Calu3 (cell line): ENCODE measurements at regions of chr4 and their contacts with region 1.

Region 1: DNA sequence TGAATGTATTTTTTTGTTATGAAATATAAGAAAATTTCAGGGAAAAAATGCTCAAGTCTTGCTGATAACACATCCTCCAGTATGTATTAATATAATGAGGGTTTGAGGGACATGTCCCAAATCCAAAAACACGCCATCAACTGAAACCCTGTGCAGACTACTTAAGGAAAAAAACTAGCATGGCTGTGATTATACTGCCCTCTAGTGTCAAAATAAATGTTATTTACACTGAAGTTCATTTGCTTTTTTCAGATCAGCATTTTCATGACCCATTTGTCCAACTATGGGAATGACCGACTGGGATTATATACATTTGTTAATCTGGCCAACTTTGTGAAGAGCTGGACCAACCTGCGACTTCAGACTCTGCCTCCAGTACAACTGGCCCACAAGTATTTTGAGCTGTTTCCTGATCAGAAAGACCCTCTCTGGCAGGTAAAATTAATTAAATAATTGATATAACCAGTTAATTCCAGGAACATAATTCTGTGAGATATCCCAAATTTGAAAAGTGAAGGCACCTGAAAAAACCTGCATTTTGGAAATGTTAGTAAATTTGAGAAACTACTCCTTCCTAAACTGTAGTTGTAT is 128.5 kb downstream of the PRSS12 start:
- DNase-seq: no peak
- H3K4me3 Mint-ChIP-seq: no peak overlapping the region
- H3K27ac Mint-ChIP-seq: no peak overlapping the region
- H3K4me1 Mint-ChIP-seq: no peaks in the 10 kb centered on the region
- H3K27me3 Mint-ChIP-seq: no peaks in the 10 kb centered on the region
- CTCF ChIP-seq: peak; percentile 29

Region 2: GRCh38 chr4:117560329-117560728 is 664.0 kb before region 1 on chr4:
- CTCF ChIA-PET with region 1: no interaction called
- intact Hi-C with region 1: loop called (anchors 5 kb)
- DNase-seq: no peak
- H3K4me3 Mint-ChIP-seq: no peak overlapping the region
- H3K27ac Mint-ChIP-seq: no peak overlapping the region
- H3K4me1 Mint-ChIP-seq: no peaks in the 10 kb centered on the region
- H3K27me3 Mint-ChIP-seq: no peaks in the 10 kb centered on the region
- CTCF ChIP-seq: no peak

Region 3: DNA sequence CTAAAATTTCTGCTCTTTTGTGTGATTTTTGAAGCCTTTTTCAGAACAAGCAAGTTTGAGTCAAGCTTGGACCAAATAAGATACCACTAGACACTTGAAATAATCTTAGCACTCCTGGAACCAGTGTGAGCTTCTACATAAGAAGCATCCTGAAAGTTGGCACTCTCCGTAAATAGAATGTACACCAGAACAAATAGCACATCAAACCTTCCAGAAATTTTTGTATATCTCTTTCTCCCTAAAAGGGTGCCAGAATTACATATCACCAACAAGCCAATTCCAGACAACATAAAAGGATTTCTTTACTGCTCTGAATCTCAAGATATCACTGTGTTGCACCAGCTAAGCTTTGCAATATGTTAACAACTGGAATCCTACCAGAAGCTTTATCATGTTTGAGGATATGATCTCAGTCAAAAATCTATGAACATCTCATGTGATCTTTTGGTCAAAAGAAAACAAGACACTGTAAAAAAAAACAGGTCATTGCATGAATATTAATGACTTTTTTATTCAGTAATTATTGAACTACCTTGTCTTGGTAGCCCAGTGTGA is 11.3 kb after region 1 on chr4:
- CTCF ChIA-PET with region 1: no interaction called
- intact Hi-C with region 1: no loop called
- DNase-seq: no peak
- H3K4me3 Mint-ChIP-seq: no peak overlapping the region
- H3K27ac Mint-ChIP-seq: no peak overlapping the region
- H3K4me1 Mint-ChIP-seq: no peaks in the 10 kb centered on the region
- H3K27me3 Mint-ChIP-seq: no peaks in the 10 kb centered on the region
- CTCF ChIP-seq: no peak